PC-3 (cell line): ENCODE measurements at regions of chrX and their contacts with region 1.

Region 1: GRCh38 chrX:136268051-136269048 is 17.1 kb upstream of the MAP7D3 start:
- DNase-seq: peak; percentile 67
- ATAC-seq: peak; percentile 71
- H3K4me3 ChIP-seq: no peak overlapping the region
- H3K27ac ChIP-seq: no peak overlapping the region
- H3K4me1 ChIP-seq: no peaks in the 10 kb centered on the region
- H3K27me3 ChIP-seq: no peaks in the 10 kb centered on the region
- CTCF ChIP-seq: peak; percentile 87

Region 2: GRCh38 chrX:136028251-136028984 is 239.9 kb before region 1 on chrX:
- CTCF ChIA-PET with region 1: interaction called, 9 read pairs
- POLR2A ChIA-PET with region 1: no interaction called
- intact Hi-C with region 1: loop called (anchors 1 kb)
- DNase-seq: peak; percentile 80
- ATAC-seq: peak; percentile 77
- H3K4me3 ChIP-seq: no peak overlapping the region
- H3K27ac ChIP-seq: no peak overlapping the region
- H3K4me1 ChIP-seq: no peaks in the 10 kb centered on the region
- H3K27me3 ChIP-seq: no peaks in the 10 kb centered on the region
- CTCF ChIP-seq: peak; percentile 79

Region 3: GRCh38 chrX:136214551-136214950 is 53.8 kb before region 1 on chrX:
- CTCF ChIA-PET with region 1: interaction called, 3 read pairs
- POLR2A ChIA-PET with region 1: no interaction called
- intact Hi-C with region 1: loop called (anchors 5 kb)
- DNase-seq: peak; percentile 92
- ATAC-seq: peak; percentile 82
- H3K4me3 ChIP-seq: no peak overlapping the region
- H3K27ac ChIP-seq: peak overlapping the region; percentile 4; the same call in 1 of the 2 replicates
- H3K4me1 ChIP-seq: peaks cover 20% of the 10 kb centered on the region
- H3K27me3 ChIP-seq: no peaks in the 10 kb centered on the region
- CTCF ChIP-seq: no peak

Region 4: GRCh38 chrX:136255541-136255940 is 12.8 kb before region 1 on chrX:
- CTCF ChIA-PET with region 1: no interaction called
- POLR2A ChIA-PET with region 1: no interaction called
- intact Hi-C with region 1: no loop called
- DNase-seq: no peak
- ATAC-seq: no peak
- H3K4me3 ChIP-seq: no peak overlapping the region
- H3K27ac ChIP-seq: no peak overlapping the region
- H3K4me1 ChIP-seq: peaks cover 14% of the 10 kb centered on the region
- H3K27me3 ChIP-seq: no peaks in the 10 kb centered on the region
- CTCF ChIP-seq: no peak